Right ventricle myocardium inferior (tissue), 1 donor: ENCODE measurements at regions of chr4 and their contacts with region 1.

Region 1: DNA sequence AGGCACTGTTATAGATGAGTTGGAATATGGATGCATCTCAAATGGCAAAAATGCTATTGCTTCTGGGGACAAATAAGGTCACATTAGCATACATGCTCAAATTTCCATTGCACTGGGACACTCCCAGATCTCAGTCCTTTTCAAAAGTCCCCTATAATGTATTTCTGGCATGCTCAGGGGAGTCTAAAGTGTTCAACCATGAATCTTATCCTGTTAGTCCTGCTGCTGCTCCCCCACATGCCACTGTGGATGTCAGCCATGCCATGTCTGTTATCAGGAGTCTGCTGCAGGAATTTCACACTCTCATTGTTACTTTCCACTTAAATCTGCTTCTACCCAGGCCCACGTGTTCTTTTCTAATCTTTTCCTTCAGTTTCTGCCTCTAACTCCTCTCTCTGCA is 1000.6 kb downstream of the CCSER1 start:
- DNase-seq: no peak
- ATAC-seq: peak; percentile 92

Region 2: GRCh38 chr4:91243132-91243531 is 115.3 kb after region 1 on chr4:
- intact Hi-C with region 1: loop called (anchors 2 kb)
- DNase-seq: peak; percentile 70
- ATAC-seq: peak; percentile 98

Region 3: GRCh38 chr4:91330555-91331137 is 202.8 kb after region 1 on chr4:
- intact Hi-C with region 1: no loop called
- DNase-seq: no peak
- ATAC-seq: no peak

Region 4: DNA sequence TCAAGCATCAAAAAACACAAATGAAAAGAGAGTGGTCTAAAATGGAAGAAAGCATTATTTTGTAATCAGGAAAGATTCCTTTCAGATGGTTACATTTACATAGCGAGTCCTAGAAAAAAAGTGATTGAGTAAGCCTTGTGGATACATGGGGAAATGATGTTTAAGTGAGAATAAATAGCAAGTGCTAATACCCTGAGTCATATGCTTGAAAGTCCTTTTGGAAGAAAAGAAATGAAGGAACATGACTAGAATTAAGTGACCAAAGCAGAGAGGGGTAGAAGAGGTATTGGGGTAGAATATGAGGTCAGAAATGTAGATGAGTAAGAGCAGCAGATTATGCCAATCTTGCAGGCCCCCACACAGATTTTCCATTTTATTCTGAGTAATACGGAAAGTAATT is 361.1 kb after region 1 on chr4:
- intact Hi-C with region 1: loop called (anchors 5 kb)
- DNase-seq: no peak
- ATAC-seq: no peak